CD8-positive, alpha-beta T cell (primary cell): ENCODE measurements at regions of chr2 and their contacts with region 1.

Region 1: GRCh38 chr2:96816128-96816835 is at the start of gene CNNM3:
- DNase-seq: peak; percentile 90 to 98 (median 96)
- ATAC-seq: peak; percentile 92
- H3K4me3 ChIP-seq: peak within 1 kb of the TSS; percentile 70 to 83
- H3K4me3 Mint-ChIP-seq: peak within 1 kb of the TSS; percentile 87
- H3K27ac ChIP-seq: peak within 1 kb of the TSS; percentile 57 to 70
- H3K27ac Mint-ChIP-seq: peak within 1 kb of the TSS; percentile 90
- H3K4me1 ChIP-seq: peaks cover 48% of the 10 kb centered on the region
- H3K4me1 Mint-ChIP-seq: peaks cover 63% of the 10 kb centered on the region
- H3K27me3 ChIP-seq: no peaks in the 10 kb centered on the region
- H3K27me3 Mint-ChIP-seq: no peaks in the 10 kb centered on the region
- CTCF ChIP-seq: peak; percentile 63
- total RNA-seq, gene CNNM3: 40.1 to 41.8 TPM

Region 2: DNA sequence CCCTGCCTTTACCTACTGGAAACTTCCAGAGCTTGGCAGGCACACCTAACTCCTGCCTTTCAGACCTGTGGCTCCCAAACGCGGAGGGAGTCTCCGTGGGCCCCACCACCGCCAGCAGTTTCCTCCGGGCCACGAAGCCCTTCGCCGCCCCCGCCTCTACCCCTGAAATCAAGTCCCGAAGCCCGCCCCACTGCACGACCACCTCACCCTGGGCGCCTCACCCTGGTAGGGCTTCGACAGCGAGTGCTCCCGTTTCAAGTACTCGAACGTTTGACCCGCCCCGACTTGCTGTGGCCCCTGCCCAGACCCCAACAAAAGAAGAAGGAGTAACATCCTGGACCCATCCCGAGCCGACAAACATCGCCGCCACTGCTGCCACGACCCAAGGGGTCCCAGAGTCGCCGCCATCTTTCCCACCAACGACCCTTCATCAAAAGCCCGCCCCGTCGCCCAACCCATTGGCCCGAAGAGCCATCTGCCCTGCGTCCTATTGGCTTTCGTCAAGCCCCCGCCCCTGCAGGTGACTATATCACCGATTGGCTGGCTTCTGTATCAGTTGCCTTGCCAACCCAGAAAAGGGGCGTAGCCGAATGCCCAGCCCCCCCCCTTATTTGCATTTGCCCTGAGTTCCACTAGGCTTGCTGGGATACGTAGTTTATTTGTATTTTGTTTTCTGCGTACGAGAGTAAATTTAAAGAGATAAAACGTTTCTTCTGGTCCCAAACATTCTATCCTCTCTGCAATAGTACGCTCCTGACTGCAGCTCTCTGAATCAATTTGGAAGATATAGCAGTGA is 76.5 kb before region 1 on chr2 and contains the start of gene LMAN2L:
- CTCF ChIA-PET with region 1: no interaction called
- POLR2A ChIA-PET with region 1: interaction called, 5 read pairs
- intact Hi-C with region 1: loop called (anchors 1 to 5 kb)
- DNase-seq: peak; percentile 92 to 99 (median 96)
- ATAC-seq: peak; percentile 98
- H3K4me3 ChIP-seq: peak within 1 kb of the TSS; percentile 60 to 98
- H3K4me3 Mint-ChIP-seq: peak within 1 kb of the TSS; percentile 97
- H3K27ac ChIP-seq: peak within 1 kb of the TSS; percentile 46 to 73
- H3K27ac Mint-ChIP-seq: peak within 1 kb of the TSS; percentile 91
- H3K4me1 ChIP-seq: peaks cover 13% of the 10 kb centered on the region
- H3K4me1 Mint-ChIP-seq: peaks cover 38% of the 10 kb centered on the region
- H3K27me3 ChIP-seq: no peaks in the 10 kb centered on the region
- H3K27me3 Mint-ChIP-seq: no peaks in the 10 kb centered on the region
- CTCF ChIP-seq: no peak
- total RNA-seq, gene LMAN2L: 1.1 to 1.7 TPM

Region 3: DNA sequence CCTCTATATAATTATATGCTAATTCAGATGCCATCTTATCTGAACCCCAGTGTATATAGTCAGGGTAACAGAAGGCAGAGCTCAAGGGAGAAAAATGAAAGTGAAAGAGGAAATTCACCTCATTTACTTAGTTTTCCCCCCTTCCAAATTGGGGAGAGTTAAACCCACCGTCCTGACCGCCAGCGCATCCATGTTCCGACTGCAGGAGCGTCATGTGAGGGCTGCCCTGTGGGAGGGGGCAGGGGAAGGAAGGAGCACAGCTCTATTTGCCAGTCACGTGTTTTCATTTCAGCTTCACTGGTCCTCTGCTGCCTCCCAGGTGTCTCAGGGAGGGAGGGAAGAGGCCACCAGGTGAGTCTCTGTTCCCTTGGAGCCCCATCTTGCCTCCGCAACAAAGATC is 42.4 kb before region 1 on chr2:
- CTCF ChIA-PET with region 1: interaction called, 4 read pairs
- POLR2A ChIA-PET with region 1: interaction called, 4 read pairs
- intact Hi-C with region 1: loop called in 1 of 2 experiments (anchors 1 kb)
- DNase-seq: peak in 8 of 9 experiments; percentile 28 to 84 (median 56)
- ATAC-seq: peak; percentile 81
- H3K4me3 ChIP-seq: peak overlapping the region; percentile 60 to 67
- H3K4me3 Mint-ChIP-seq: peak overlapping the region; percentile 94
- H3K27ac ChIP-seq: peak overlapping the region; percentile 32 to 78
- H3K27ac Mint-ChIP-seq: peak overlapping the region; percentile 94
- H3K4me1 ChIP-seq: peaks cover 19% of the 10 kb centered on the region
- H3K4me1 Mint-ChIP-seq: peaks cover 26% of the 10 kb centered on the region
- H3K27me3 ChIP-seq: no peaks in the 10 kb centered on the region
- H3K27me3 Mint-ChIP-seq: no peaks in the 10 kb centered on the region
- CTCF ChIP-seq: no peak

Region 4: DNA sequence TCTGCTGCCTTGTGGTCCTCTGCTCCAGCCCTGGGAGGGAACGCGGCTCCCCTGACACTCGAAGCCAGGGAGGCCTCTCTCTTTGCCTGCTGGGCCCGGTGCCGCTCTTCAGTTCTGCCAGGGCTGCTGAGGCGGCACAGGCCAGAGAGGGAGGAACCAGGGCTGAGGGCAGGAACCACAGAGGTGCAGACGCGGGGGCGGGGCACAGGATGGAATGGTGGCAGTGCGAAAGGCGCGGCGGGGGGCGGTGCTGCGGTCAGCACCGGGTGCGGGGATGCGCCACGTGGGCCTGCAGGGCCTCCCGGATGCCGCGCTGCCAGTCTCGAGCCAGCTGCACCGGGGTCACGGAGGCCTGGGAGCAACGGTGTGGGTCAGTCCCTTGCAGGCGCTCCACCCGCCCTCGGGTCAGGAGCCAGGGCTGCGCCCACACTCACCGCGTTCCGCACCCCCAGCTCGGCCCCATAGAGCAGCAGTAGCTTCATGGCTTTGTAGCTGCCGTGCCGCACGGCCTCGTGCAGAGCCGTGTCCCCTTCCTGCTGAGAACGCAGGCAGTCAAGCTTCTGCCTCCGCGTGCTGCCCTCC is 23.1 kb after region 1 on chr2:
- CTCF ChIA-PET with region 1: interaction called, 6 read pairs
- POLR2A ChIA-PET with region 1: interaction called, 4 read pairs
- intact Hi-C with region 1: loop called (anchors 1 kb)
- DNase-seq: peak; percentile 65 to 92 (median 86)
- ATAC-seq: peak; percentile 97
- H3K4me3 ChIP-seq: peak overlapping the region; percentile 35 to 40
- H3K4me3 Mint-ChIP-seq: peak overlapping the region; percentile 70
- H3K27ac ChIP-seq: peak overlapping the region in 1 of 2 experiments; percentile 42
- H3K27ac Mint-ChIP-seq: peak overlapping the region; percentile 62
- H3K4me1 ChIP-seq: peaks cover 26% of the 10 kb centered on the region
- H3K4me1 Mint-ChIP-seq: peaks cover 18% of the 10 kb centered on the region
- H3K27me3 ChIP-seq: no peaks in the 10 kb centered on the region
- H3K27me3 Mint-ChIP-seq: no peaks in the 10 kb centered on the region
- CTCF ChIP-seq: no peak